Pancreas (tissue), 10 donors: ENCODE measurements at regions of chr1 and their contacts with region 1.

Region 1: DNA sequence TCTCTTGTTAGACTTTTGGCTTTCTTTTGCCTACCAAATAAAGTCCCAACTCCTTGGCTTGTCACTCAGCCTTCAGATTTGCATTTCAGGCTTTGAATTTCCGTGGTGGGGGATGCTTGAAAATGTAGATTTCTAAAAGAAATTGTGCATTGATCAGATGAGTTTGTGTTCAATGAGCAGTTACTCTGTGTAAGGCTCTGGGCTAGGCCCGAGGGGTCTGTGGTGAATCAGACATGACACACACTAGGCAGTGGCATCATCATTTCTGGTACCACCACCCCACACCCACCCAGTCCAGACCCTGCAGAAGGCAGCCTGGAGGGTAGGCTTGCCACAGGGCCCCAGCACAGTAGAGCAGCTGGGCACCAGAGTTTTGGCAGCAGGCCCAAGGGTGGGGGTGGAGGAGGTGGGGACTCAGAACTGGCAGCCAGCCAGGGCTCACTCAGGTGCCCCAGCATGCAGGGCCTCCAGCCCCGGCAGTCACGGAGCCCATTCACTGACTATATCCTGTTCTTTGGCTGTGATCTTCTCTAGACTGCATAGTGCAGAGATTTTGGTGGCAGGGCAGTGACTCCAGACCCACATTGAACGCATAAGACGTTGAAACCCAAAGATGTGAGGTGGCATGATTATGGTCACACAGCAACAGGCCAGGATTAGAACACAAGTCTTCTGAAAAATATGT is 97.2 kb upstream of the ARTN start:
- DNase-seq: peak; percentile 20 to 78 (median 56)
- ATAC-seq: peak in 3 of 4 donors; percentile 72 to 76 (median 75)
- H3K4me3 ChIP-seq: no peak overlapping the region
- H3K27ac ChIP-seq: no peak overlapping the region
- H3K4me1 ChIP-seq: no peaks in the 10 kb centered on the region
- H3K27me3 ChIP-seq: no peaks in the 10 kb centered on the region
- CTCF ChIP-seq: no peak

Region 2: GRCh38 chr1:43885311-43885801 is 48.9 kb after region 1 on chr1:
- intact Hi-C with region 1: loop called in 1 of 3 experiments (anchors 2 kb)
- DNase-seq: no peak
- ATAC-seq: peak in 1 of 4 donors; percentile 23
- H3K4me3 ChIP-seq: no peak overlapping the region
- H3K27ac ChIP-seq: no peak overlapping the region
- H3K4me1 ChIP-seq: no peaks in the 10 kb centered on the region
- H3K27me3 ChIP-seq: no peaks in the 10 kb centered on the region
- CTCF ChIP-seq: no peak